GM12878 (cell line): ENCODE measurements at regions of chr11 and their contacts with region 1.

Region 1: GRCh38 chr11:20110908-20111669 is 49.2 kb downstream of the DBX1 start:
- DNase-seq: peak; percentile 8
- ATAC-seq: peak; percentile 97
- H3K4me3 ChIP-seq: no peak overlapping the region
- H3K27ac ChIP-seq: no peak overlapping the region
- H3K4me1 ChIP-seq: no peaks in the 10 kb centered on the region; the same call in 1 of the 2 replicates
- H3K27me3 ChIP-seq: no peaks in the 10 kb centered on the region
- CTCF ChIP-seq: peak; percentile 90 to 94 (median 94); a peak in 5 of 6 replicates
- EP300 ChIP-seq: no peak
- POLR2A ChIP-seq: no peak
- RAD21 ChIP-seq: peak; percentile 83

Region 2: GRCh38 chr11:19938169-19938856 is 172.8 kb before region 1 on chr11:
- CTCF ChIA-PET with region 1: interaction called, 8 read pairs
- POLR2A ChIA-PET with region 1: no interaction called
- RAD21 ChIA-PET with region 1: interaction called, 5 read pairs
- SMC1A ChIA-PET with region 1: interaction called, 3 read pairs
- in situ Hi-C with region 1: no loop called
- intact Hi-C with region 1: loop called (anchors 2 kb)
- DNase-seq: no peak
- ATAC-seq: peak; percentile 87
- H3K4me3 ChIP-seq: no peak overlapping the region
- H3K27ac ChIP-seq: no peak overlapping the region
- H3K4me1 ChIP-seq: peaks cover 4% of the 10 kb centered on the region; the same call in 1 of the 2 replicates
- H3K27me3 ChIP-seq: no peaks in the 10 kb centered on the region
- CTCF ChIP-seq: peak; percentile 64 to 93 (median 83)
- EP300 ChIP-seq: no peak
- POLR2A ChIP-seq: no peak
- RAD21 ChIP-seq: peak; percentile 53

Region 3: DNA sequence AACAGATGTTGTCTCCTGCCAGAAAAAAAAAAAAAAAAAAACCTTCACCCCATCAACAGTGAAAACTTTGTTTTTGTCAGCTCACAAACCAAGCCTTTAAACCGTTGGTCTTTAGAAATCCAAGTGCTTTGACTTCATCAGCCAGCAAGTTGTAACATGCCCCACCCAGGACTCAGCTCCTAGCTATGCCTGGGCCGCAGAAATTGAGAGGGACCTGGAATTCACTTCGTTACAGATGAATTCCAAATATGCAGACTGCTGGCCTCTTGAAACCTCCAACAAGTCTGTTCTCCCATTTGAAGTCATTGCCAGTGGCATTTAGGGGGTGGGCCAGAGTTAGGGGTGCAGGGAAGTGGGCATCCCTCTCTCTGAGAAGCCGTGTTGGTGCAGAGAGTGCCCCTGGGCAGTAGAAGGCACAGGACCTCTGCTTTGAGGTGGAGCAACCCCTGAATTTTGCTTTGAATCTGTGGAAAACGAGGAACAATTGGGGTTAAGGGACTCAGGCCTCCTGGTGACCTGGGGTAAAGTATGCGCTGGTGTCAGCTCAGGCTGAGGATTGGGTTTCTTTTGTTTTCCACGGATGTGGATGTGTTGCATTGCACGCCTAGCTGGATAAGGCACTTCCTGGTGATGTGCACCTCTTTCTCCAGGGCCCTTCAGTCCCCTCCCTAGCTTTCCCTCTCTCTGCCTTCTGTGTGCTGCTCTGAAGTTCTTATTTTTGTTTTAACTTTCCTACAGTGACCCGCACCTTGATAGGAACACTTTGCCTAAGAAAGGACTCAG is 60.3 kb before region 1 on chr11:
- CTCF ChIA-PET with region 1: no interaction called
- POLR2A ChIA-PET with region 1: no interaction called
- RAD21 ChIA-PET with region 1: no interaction called
- SMC1A ChIA-PET with region 1: no interaction called
- in situ Hi-C with region 1: no loop called
- intact Hi-C with region 1: no loop called
- DNase-seq: no peak
- ATAC-seq: no peak
- H3K4me3 ChIP-seq: no peak overlapping the region
- H3K27ac ChIP-seq: no peak overlapping the region
- H3K4me1 ChIP-seq: no peaks in the 10 kb centered on the region
- H3K27me3 ChIP-seq: no peaks in the 10 kb centered on the region
- CTCF ChIP-seq: no peak
- EP300 ChIP-seq: no peak
- POLR2A ChIP-seq: no peak
- RAD21 ChIP-seq: no peak

Region 4: DNA sequence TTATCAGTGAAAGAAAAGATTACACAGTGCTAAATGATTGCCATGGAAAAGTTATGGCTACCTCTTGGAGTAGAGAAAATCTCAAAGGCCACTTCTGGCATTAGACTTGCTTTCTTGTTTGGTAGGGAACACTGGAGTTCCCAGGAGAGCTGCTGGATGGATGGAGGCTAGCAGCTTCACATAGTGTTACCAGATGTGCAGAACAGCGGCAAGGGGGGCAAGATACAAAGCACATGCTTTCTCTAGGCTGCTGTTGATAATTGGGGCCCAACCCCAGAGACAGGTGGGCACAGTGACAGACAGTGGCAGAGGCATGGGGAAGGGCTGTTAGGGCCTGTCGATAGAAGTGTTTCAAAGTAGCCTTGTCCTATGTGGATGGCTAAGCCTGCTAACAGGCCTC is 45.7 kb before region 1 on chr11:
- CTCF ChIA-PET with region 1: no interaction called
- POLR2A ChIA-PET with region 1: no interaction called
- RAD21 ChIA-PET with region 1: no interaction called
- SMC1A ChIA-PET with region 1: no interaction called
- in situ Hi-C with region 1: no loop called
- intact Hi-C with region 1: no loop called
- DNase-seq: no peak
- ATAC-seq: no peak
- H3K4me3 ChIP-seq: no peak overlapping the region
- H3K27ac ChIP-seq: no peak overlapping the region
- H3K4me1 ChIP-seq: no peaks in the 10 kb centered on the region
- H3K27me3 ChIP-seq: 0 out of 4 replicates have a peak, but pooled peaks cover 0 to 2% of the 10 kb centered on the region in 2 experiments
- CTCF ChIP-seq: no peak
- EP300 ChIP-seq: no peak
- POLR2A ChIP-seq: no peak
- RAD21 ChIP-seq: no peak

Region 5: GRCh38 chr11:20075627-20076026 is 35.5 kb before region 1 on chr11:
- CTCF ChIA-PET with region 1: interaction called, 3 read pairs
- POLR2A ChIA-PET with region 1: no interaction called
- RAD21 ChIA-PET with region 1: no interaction called
- SMC1A ChIA-PET with region 1: no interaction called
- in situ Hi-C with region 1: no loop called
- intact Hi-C with region 1: loop called (anchors 1 kb)
- DNase-seq: no peak
- ATAC-seq: no peak
- H3K4me3 ChIP-seq: no peak overlapping the region
- H3K27ac ChIP-seq: no peak overlapping the region
- H3K4me1 ChIP-seq: peaks cover 6% of the 10 kb centered on the region; the same call in 1 of the 2 replicates
- H3K27me3 ChIP-seq: no peaks in the 10 kb centered on the region
- CTCF ChIP-seq: no peak
- EP300 ChIP-seq: no peak
- POLR2A ChIP-seq: no peak
- RAD21 ChIP-seq: no peak

Region 6: DNA sequence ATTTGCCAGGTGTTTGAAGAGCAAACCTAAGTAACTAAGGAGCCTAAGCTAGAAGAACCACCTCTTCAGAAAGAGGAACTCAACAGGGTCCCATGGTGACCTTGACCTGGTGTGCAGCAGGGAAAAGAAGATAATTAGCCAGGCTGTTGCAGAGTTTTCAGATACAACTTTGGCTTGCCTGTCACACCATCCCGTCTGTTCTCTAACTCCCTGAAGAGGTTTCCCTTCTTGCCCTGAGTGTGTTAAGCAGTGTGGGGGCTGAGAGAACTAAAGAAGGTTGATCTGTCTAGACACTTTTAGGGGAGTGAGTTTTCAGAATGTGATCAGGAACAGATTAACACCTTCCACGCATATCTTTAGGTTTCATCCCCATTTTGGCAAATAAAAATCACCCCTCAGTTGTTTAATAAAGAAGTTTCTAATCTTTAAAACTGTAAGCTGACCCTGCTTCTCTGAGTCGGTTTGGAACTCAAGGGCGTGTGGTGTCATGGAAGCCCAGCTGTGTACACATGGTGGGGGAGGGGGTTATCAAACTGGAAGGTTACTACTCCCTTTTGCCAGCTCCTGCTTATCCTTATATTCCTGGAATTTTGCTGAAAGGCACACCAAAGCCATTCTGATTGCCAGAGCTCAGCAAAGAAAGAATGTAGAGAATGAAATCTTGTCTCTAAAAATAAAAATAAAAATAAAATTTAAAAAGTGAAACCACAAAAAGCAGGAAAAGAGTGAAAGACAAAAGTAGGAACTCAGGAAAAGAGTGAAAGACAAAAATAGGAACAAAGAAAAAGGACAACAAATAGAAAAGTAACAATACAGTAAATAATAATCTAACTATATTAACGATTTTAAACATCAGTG is 21.1 kb before region 1 on chr11:
- CTCF ChIA-PET with region 1: interaction called, 12 read pairs
- POLR2A ChIA-PET with region 1: no interaction called
- RAD21 ChIA-PET with region 1: no interaction called
- SMC1A ChIA-PET with region 1: interaction called, 3 read pairs
- in situ Hi-C with region 1: no loop called
- intact Hi-C with region 1: no loop called
- DNase-seq: no peak
- ATAC-seq: peak; percentile 36
- H3K4me3 ChIP-seq: no peak overlapping the region
- H3K27ac ChIP-seq: no peak overlapping the region
- H3K4me1 ChIP-seq: peaks cover 2% of the 10 kb centered on the region; the same call in 1 of the 2 replicates
- H3K27me3 ChIP-seq: no peaks in the 10 kb centered on the region
- CTCF ChIP-seq: no peak
- EP300 ChIP-seq: no peak
- POLR2A ChIP-seq: no peak
- RAD21 ChIP-seq: no peak

Region 7: DNA sequence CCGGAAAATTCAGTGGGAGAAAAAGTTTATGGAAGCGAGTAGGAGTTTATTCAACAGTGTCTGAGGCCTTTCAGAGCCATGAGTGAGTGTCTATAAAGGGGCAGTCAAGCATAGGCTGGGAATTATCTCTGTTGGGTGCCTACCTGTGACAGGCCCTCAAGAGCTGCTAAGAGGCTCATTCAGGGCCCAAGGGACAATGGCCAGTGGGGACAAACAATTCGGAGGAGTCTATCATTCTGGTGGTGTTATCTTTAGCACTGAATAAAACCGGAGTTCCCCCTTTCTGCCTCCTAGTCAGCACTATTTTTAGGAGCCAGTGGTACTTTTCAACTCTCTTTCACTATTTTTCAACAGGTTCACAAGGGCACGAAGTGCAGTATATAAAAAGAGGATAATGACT is 162.9 kb after region 1 on chr11:
- CTCF ChIA-PET with region 1: no interaction called
- POLR2A ChIA-PET with region 1: no interaction called
- RAD21 ChIA-PET with region 1: no interaction called
- SMC1A ChIA-PET with region 1: no interaction called
- in situ Hi-C with region 1: no loop called
- intact Hi-C with region 1: no loop called
- DNase-seq: no peak
- ATAC-seq: peak; percentile 70
- H3K4me3 ChIP-seq: no peak overlapping the region
- H3K27ac ChIP-seq: no peak overlapping the region
- H3K4me1 ChIP-seq: no peaks in the 10 kb centered on the region
- H3K27me3 ChIP-seq: no peaks in the 10 kb centered on the region; a peak in 1 of 4 replicates
- CTCF ChIP-seq: no peak
- EP300 ChIP-seq: no peak
- POLR2A ChIP-seq: no peak
- RAD21 ChIP-seq: no peak

Region 8: DNA sequence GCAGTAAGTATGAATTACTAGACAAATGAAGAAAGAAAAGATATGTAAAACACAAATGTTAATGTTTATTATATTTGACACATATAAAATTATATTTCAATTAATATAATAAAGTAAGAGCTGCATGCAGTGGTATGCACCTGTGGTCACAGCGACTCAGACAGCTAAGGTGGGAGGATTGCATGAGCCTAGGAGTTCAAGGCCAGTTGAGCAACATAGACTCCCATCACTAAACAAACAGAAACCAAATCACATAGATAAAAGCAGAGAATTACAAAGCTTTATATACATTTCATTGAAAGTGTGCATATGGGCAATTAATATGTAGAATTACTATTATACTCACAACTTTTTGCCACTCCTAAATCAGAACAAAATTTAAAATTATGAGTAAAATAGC is 182.4 kb after region 1 on chr11:
- CTCF ChIA-PET with region 1: no interaction called
- POLR2A ChIA-PET with region 1: no interaction called
- RAD21 ChIA-PET with region 1: no interaction called
- SMC1A ChIA-PET with region 1: no interaction called
- in situ Hi-C with region 1: no loop called
- intact Hi-C with region 1: no loop called
- DNase-seq: no peak
- ATAC-seq: no peak
- H3K4me3 ChIP-seq: no peak overlapping the region
- H3K27ac ChIP-seq: no peak overlapping the region
- H3K4me1 ChIP-seq: no peaks in the 10 kb centered on the region
- H3K27me3 ChIP-seq: 0 out of 4 replicates have a peak, but pooled peaks cover 0 to 3% of the 10 kb centered on the region in 2 experiments
- CTCF ChIP-seq: no peak
- EP300 ChIP-seq: no peak
- POLR2A ChIP-seq: no peak
- RAD21 ChIP-seq: no peak